A549 (cell line): ENCODE measurements at regions of chr14 and their contacts with region 1.

Region 1: DNA sequence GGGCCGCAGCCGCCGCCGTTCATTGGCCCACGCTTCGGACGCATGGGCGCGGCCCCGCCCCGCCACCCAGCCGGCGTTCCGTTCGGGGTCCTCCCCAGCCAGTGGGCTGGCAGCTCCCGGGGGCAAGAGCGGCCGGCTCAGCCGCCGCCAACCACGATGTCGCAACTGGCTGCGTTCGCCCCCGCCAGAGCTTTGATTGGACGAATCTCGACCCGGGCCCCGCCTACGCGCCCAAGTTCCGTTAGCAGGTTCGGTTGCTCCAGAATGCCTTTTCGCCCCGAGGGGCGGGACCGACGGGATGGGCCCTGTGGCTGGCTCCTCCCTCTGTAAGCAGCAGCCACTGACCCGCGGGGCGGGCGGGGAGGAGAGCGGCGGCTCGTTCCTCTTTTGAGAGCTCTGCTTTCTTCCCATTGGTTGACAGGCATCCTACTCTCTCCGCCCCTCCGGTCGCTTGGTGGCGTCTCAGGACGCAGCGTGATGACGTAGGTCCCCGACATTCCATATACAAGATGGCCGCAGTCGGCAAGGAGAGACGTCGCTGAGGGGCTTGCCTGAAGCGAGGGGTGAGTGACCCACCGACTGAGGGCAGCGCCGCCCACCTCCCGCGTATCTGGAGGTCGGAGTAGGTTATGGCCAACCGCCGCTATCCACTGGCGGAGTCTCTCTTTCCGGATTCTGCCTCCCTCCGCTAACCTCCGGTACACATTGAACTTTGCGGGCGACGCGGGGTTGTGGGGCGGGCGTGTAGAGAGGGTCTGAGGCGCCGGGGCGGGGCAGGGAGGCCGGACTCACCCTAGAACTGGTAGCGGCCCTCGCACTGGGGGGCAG is at the start of gene CCNK:
- DNase-seq: peak; percentile 99 to 100
- ATAC-seq: peak; percentile 89 to 95
- H3K4me3 ChIP-seq: peak within 1 kb of the TSS; percentile 94
- H3K27ac ChIP-seq: peak within 1 kb of the TSS; percentile 88 to 96
- H3K4me1 ChIP-seq: peaks cover 28% of the 10 kb centered on the region
- CTCF ChIP-seq: no peak
- EP300 ChIP-seq: no peak
- POLR2A ChIP-seq: peak; percentile 93
- RAD21 ChIP-seq: no peak
- polyA plus RNA-seq, gene CCNK: 22.7 and 38.9 TPM in 2 replicates

Region 2: GRCh38 chr14:99497894-99498293 is 16.8 kb after region 1 on chr14:
- CTCF ChIA-PET with region 1: interaction called, 5 read pairs
- POLR2A ChIA-PET with region 1: interaction called, 22 read pairs
- DNase-seq: no peak
- ATAC-seq: no peak
- H3K4me3 ChIP-seq: no peak overlapping the region
- H3K27ac ChIP-seq: no peak overlapping the region
- H3K4me1 ChIP-seq: no peaks in the 10 kb centered on the region
- CTCF ChIP-seq: no peak
- EP300 ChIP-seq: no peak
- POLR2A ChIP-seq: no peak
- RAD21 ChIP-seq: no peak

Region 3: DNA sequence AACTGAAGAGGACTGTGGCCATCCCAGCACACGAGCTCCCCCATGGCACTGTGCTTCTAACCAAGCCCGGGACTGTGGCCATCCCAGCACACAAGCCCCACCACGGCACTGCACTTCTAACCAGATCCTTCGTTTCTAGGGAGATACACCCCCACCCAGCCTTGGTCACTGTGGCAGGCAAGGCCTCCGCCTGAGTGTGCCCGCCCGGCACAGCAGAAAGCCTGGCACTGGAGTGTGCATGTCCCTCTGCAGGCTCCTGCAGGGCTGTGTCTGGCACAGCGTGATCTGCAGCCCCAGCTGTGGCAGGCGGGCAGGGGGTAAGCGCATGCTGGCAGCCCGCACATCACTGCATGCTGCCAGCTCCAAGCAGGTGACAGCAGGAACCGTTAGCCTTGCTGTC is 73.1 kb after region 1 on chr14:
- CTCF ChIA-PET with region 1: no interaction called
- POLR2A ChIA-PET with region 1: no interaction called
- DNase-seq: no peak
- ATAC-seq: peak in 1 of 2 experiments; percentile 48; a peak in 3 of 6 replicates
- H3K4me3 ChIP-seq: no peak overlapping the region
- H3K27ac ChIP-seq: peak overlapping the region; percentile 44 to 60; a peak in 4 of 6 replicates
- H3K4me1 ChIP-seq: peaks cover 40% of the 10 kb centered on the region
- CTCF ChIP-seq: no peak
- EP300 ChIP-seq: no peak
- POLR2A ChIP-seq: no peak
- RAD21 ChIP-seq: no peak